ENCODE measurements at regions of chr20 and their contacts with region 1.

Region 1: DNA sequence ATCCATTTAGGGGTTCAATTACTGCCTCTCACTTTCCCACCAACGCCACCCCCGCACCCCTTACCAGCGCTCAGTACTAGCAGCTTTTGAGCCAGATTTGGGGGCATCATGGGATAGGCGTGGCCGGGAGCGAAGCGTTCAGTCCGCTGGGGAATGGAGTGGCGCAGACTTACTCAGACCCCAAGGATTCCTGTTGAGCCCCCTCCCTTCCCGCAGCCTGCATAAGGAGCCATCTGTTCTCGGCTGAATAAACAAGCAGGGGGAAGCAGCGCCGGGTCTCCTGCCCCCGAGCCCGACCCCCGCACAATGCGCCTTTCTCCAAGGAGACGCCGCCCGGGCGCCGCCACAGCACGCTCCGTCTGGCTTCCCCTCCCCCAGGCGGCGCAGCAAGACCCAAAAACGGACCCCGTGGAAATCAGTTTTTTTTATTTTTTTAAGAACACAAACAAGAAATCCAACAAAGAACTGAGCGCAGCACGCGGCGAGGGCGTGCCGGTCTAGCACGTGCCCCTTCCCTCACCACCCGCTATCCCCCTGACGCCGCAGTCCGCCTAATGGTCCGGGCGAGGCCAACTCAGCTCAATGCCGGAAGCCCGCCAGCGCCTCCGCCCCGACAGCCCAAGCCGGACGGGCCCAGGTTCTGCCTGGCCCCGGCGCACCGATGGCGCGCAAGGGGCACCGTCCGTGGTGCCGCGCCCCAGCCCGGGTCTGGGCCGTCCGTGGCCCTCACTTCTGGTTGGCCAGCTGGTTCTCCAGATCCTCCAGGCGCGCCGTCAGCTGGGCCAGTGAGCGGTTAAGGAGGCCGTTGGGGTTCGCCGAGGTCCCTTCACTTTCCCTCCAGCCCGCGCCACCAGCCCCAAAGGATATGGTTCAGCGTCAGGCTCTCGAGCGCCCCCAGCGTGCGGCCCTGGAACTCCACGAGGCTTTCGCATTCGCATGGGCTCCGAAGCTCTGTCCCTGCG is 13.3 kb upstream of the RBPJL start:
- DNase-seq: no peak
- H3K4me3 ChIP-seq: peak overlapping the region; percentile 51
- H3K27me3 ChIP-seq: no peaks in the 10 kb centered on the region; the same call in 1 of the 2 replicates
- CTCF ChIP-seq: peak; percentile 99

Region 2: DNA sequence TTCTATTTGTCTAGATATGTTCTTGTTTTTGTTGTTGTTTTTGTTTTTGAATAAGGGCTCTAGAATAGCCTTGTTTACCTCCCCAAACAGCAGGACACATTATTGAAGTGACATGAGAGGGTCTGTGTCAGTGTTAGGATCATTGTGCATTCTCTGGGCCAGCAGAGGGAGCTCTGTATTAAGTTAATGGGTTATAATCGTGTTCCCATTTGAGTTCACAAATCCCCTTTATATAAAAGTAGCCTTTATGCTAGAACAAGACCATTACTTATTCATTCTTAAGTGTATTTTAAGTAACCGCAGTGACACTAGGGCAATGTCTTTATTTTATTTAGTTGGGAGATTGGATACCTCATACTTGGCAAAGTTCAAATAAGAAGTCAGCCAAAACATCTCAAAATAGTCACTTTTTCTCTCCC is 282.2 kb before region 1 on chr20:
- CTCF ChIA-PET with region 1: interaction called, 64 read pairs
- POLR2A ChIA-PET with region 1: no interaction called
- DNase-seq: no peak
- H3K4me3 ChIP-seq: no peak overlapping the region
- H3K27me3 ChIP-seq: no peaks in the 10 kb centered on the region
- CTCF ChIP-seq: peak; percentile 71

Region 3: GRCh38 chr20:45044084-45044573 is 249.2 kb before region 1 on chr20:
- CTCF ChIA-PET with region 1: interaction called, 37 read pairs
- POLR2A ChIA-PET with region 1: no interaction called
- DNase-seq: no peak
- H3K4me3 ChIP-seq: no peak overlapping the region
- H3K27me3 ChIP-seq: no peaks in the 10 kb centered on the region
- CTCF ChIP-seq: peak; percentile 87

Region 4: DNA sequence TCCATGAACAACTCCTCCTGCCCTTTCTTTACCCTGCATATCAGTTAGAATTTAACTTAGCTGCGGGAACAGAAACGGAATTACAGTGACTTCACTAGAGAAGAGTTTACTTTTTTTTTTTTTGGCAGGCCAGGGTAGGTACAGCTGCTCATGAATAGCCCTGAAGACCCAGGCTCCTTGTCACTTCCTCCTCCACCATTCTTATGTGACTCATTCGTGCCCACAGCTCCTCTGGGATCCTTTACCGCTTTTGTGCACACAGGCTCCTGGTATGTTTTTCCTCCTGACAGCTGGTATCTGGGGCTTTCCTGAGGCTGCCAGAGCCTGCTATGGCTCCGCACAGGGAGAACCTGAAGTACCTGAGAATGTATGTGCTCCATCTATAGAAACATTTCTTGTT is 188.5 kb before region 1 on chr20:
- CTCF ChIA-PET with region 1: interaction called, 78 read pairs
- POLR2A ChIA-PET with region 1: no interaction called
- DNase-seq: no peak
- H3K4me3 ChIP-seq: no peak overlapping the region
- H3K27me3 ChIP-seq: peaks cover under 1% of the 10 kb centered on the region; the same call in 1 of the 2 replicates
- CTCF ChIP-seq: no peak

Region 5: DNA sequence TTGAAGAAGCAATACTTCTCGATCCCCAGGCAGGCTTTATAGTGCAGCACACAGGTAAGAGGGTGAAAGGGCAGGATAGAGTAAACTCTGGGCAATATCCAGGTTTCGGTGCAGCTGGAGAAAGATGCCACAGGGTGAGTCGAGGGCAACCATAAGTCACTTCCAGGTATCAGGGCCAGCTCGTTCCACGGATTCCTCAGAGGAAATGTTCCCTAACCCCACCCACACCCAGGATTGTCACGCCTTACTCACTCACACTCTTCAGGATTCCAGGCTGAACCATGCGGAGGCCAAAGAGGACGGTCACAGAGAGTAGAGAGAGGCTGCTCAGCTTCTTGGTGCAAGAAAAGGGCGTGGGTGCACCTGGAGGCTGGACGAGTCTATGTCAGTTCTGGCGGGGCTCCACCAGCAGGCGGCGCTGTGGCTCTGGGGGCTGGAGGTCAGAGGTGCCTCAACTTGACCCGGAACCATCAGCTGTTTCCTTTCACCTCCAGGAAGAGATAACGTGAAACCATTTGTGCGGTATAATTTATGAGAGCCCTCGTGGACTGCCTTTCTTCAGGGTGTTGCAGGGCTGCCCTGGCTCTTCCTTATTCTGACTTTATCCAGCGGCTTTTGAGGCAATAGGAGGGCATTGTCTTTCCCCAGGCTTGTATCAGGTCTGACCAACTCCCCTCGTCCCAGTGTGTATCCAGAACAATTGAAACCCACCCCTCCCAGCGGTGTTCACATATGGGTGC is 154.6 kb before region 1 on chr20:
- CTCF ChIA-PET with region 1: interaction called, 23 read pairs
- POLR2A ChIA-PET with region 1: no interaction called
- DNase-seq: no peak
- H3K4me3 ChIP-seq: no peak overlapping the region
- H3K27me3 ChIP-seq: peaks cover 7% of the 10 kb centered on the region
- CTCF ChIP-seq: peak; percentile 64